Left colon (tissue), 2 donors: ENCODE measurements at regions of chr20 and their contacts with region 1.

Region 1: GRCh38 chr20:62668441-62669027 is 26.2 kb downstream of the SLCO4A1 start:
- DNase-seq: peak; percentile 64 to 73
- ATAC-seq: peak; percentile 38

Region 2: DNA sequence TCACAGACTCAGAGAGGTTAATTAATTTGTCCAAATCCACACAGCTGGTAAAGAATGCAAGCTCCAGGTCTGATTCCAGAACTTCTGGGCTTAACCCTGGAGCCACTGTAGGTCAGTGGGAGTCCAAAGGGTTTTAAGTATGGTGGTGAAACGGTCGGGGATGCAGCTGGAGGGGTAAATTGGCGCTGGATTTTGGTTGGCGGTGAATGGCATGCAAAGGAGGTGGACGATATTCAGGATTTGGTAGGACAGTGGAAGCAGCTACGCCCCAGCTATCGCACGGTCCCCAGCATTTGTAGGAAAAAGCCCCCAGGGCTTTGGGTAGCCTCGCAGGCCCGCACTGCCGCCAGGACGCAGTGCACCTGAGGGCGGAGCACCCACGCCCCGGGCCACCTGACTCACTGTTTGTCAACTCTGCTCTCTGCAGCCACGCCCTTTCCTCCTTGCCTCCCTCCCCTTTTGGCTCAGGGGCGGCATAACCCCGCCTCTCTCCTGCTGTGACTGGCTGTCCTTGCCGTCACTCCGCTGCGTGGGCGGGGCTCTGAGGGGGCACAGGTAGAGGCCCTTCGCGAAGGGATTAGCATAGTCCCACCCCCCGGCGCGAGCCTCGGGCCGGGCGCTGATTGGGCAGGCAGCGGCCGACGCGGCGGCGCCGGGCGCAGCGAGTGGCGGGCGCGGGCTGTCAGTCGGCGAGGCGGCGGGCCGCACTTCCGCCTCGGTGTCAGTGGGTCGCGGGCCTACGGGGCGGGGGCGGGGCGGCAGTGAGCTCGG is 430.5 kb before region 1 on chr20 and contains the start of gene OSBPL2:
- intact Hi-C with region 1: no loop called
- DNase-seq: peak; percentile 99
- ATAC-seq: peak; percentile 86
- total RNA-seq, gene OSBPL2: 91.6 to 99.5 TPM

Region 3: GRCh38 chr20:62603021-62603906 is 65.3 kb before region 1 on chr20:
- intact Hi-C with region 1: no loop called
- DNase-seq: peak in 1 of 2 donors; percentile 57
- ATAC-seq: peak; percentile 58

Region 4: DNA sequence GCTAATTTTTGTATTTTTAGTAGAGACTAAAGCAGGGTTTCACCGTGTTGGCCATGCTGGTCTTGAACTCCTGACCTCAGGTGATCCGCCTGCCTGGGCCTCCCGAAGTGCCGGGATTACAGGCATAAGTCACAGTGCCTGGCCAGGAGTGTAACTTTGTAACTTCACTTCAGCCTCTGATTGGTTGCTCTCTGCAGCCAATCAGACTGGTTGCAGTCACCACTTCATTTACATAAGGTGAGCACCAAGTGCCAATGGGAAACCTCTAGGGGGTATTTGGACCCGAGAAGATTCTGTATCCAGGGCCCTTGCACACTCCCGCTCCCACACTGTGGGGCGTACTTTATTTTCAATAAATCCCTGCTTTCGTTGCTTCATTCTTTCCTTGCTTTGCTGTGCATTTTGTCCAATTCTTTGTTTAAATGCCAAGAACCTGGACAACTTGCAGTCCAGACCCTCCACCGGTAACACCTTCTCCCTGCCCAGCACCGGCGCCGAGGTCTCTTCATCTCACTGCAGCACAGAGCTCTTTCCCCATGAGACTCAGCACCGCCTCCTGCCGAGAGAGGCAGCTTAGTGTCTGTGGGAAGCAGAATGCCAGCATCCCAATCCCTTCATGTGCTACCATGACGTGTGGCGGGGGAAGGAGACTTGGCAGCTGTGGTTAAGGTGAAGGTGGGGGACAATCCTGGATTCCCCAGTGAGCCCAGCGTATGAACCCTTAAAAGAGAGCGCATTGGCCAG is 113.8 kb after region 1 on chr20:
- intact Hi-C with region 1: loop called in 1 of 2 experiments (anchors 10 kb)
- DNase-seq: no peak
- ATAC-seq: no peak

Region 5: GRCh38 chr20:62793912-62794724 is 125.6 kb after region 1 on chr20:
- intact Hi-C with region 1: loop called (anchors 5 to 10 kb)
- DNase-seq: peak; percentile 96 to 99
- ATAC-seq: peak; percentile 77